Caco-2 (cell line): ENCODE measurements at regions of chr10 and their contacts with region 1.

Region 1: GRCh38 chr10:110181451-110181850 is 26.0 kb upstream of the MXI1 start:
- DNase-seq: no peak
- H3K4me3 ChIP-seq: no peak overlapping the region
- H3K4me3 Mint-ChIP-seq: no peak overlapping the region
- H3K27ac Mint-ChIP-seq: no peak overlapping the region
- H3K4me1 ChIP-seq: peaks cover 17% of the 10 kb centered on the region
- H3K4me1 Mint-ChIP-seq: no peaks in the 10 kb centered on the region
- H3K27me3 ChIP-seq: no peaks in the 10 kb centered on the region
- H3K27me3 Mint-ChIP-seq: no peaks in the 10 kb centered on the region
- CTCF ChIP-seq: no peak

Region 2: DNA sequence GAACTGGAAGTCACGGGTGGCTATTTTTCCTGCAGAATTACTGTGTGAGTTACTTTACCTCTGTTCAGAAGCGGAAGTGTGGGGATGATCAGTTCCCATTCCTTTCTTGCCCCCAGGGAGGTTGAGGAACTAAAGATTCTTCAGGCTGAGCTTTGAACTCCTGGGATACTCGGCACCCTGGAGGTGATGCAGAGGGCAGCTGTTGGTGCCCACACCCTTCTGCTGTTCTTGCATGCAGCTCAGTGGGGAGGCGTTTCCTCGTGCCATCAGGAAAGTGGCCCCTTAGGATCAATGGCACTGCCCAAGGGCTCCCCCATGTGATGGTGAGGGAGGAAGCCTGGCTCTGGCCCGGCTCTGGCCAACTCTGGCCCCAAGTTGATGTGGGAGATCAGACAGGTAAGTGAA is 18.7 kb before region 1 on chr10:
- CTCF ChIA-PET with region 1: interaction called, 4 read pairs
- POLR2A ChIA-PET with region 1: no interaction called
- intact Hi-C with region 1: loop called (anchors 2 kb)
- DNase-seq: peak in 1 of 2 experiments; percentile 34
- H3K4me3 ChIP-seq: no peak overlapping the region
- H3K4me3 Mint-ChIP-seq: peak overlapping the region; percentile 55
- H3K27ac Mint-ChIP-seq: peak overlapping the region; percentile 79
- H3K4me1 ChIP-seq: peaks cover 39% of the 10 kb centered on the region
- H3K4me1 Mint-ChIP-seq: peaks cover 31% of the 10 kb centered on the region
- H3K27me3 ChIP-seq: no peaks in the 10 kb centered on the region
- H3K27me3 Mint-ChIP-seq: no peaks in the 10 kb centered on the region
- CTCF ChIP-seq: no peak

Region 3: GRCh38 chr10:110944792-110945396 is 763.4 kb after region 1 on chr10:
- CTCF ChIA-PET with region 1: no interaction called
- POLR2A ChIA-PET with region 1: no interaction called
- intact Hi-C with region 1: no loop called
- DNase-seq: no peak
- H3K4me3 ChIP-seq: no peak overlapping the region
- H3K4me3 Mint-ChIP-seq: no peak overlapping the region
- H3K27ac Mint-ChIP-seq: no peak overlapping the region
- H3K4me1 ChIP-seq: no peaks in the 10 kb centered on the region
- H3K4me1 Mint-ChIP-seq: peaks cover 8% of the 10 kb centered on the region
- H3K27me3 ChIP-seq: no peaks in the 10 kb centered on the region
- H3K27me3 Mint-ChIP-seq: no peaks in the 10 kb centered on the region
- CTCF ChIP-seq: no peak